ENCODE measurements at regions of chr11 and their contacts with region 1.

Region 1: GRCh38 chr11:72091005-72091691 is 10.5 kb downstream of the LRRC51 start:
- DNase-seq: peak; percentile 55 to 80
- ATAC-seq: peak; percentile 87 to 94 (median 92)
- H3K4me3 ChIP-seq: no peak overlapping the region
- H3K27ac ChIP-seq: peak overlapping the region in 5 of 10 donors; percentile 28 to 67 (median 49)
- H3K4me1 ChIP-seq: peaks cover 0 to 22% (median 12%) of the 10 kb centered on the region in 9 donors
- H3K27me3 ChIP-seq: no peaks in the 10 kb centered on the region
- CTCF ChIP-seq: peak; percentile 71 to 95 (median 88)

Region 2: GRCh38 chr11:71977743-71978418 is 113.3 kb before region 1 on chr11:
- intact Hi-C with region 1: loop called in 4 of 10 experiments (anchors 2 to 5 kb)
- DNase-seq: peak in 1 of 2 donors; percentile 45
- ATAC-seq: peak in 6 of 8 donors; percentile 35 to 81 (median 68)
- H3K4me3 ChIP-seq: no peak overlapping the region
- H3K27ac ChIP-seq: peak overlapping the region in 1 of 10 donors; percentile 41
- H3K4me1 ChIP-seq: peaks cover 0 to 6% (median 0%) of the 10 kb centered on the region in 9 donors
- H3K27me3 ChIP-seq: no peaks in the 10 kb centered on the region
- CTCF ChIP-seq: peak; percentile 59 to 83 (median 74)

Region 3: GRCh38 chr11:72012897-72013721 is 78.0 kb before region 1 on chr11:
- intact Hi-C with region 1: no loop called
- DNase-seq: peak; percentile 71 to 72
- ATAC-seq: peak; percentile 67 to 87 (median 80)
- H3K4me3 ChIP-seq: no peak overlapping the region
- H3K27ac ChIP-seq: peak overlapping the region in 9 of 10 donors; percentile 23 to 76 (median 53)
- H3K4me1 ChIP-seq: peaks cover 33 to 55% (median 43%) of the 10 kb centered on the region in 9 donors
- H3K27me3 ChIP-seq: no peaks in the 10 kb centered on the region
- CTCF ChIP-seq: peak in 2 of 9 donors; percentile 12 to 18

Region 4: GRCh38 chr11:72024069-72024754 is 66.9 kb before region 1 on chr11:
- intact Hi-C with region 1: loop called (anchors 1 to 5 kb)
- DNase-seq: no peak
- ATAC-seq: no peak
- H3K4me3 ChIP-seq: no peak overlapping the region
- H3K27ac ChIP-seq: peak overlapping the region in 1 of 10 donors; percentile 27
- H3K4me1 ChIP-seq: peaks cover 3 to 53% (median 37%) of the 10 kb centered on the region in 9 donors
- H3K27me3 ChIP-seq: no peaks in the 10 kb centered on the region
- CTCF ChIP-seq: no peak

Region 5: GRCh38 chr11:72030472-72031045 is 60.6 kb before region 1 on chr11:
- intact Hi-C with region 1: loop called in 9 of 10 experiments (anchors 1 to 2 kb)
- DNase-seq: no peak
- ATAC-seq: no peak
- H3K4me3 ChIP-seq: no peak overlapping the region
- H3K27ac ChIP-seq: no peak overlapping the region
- H3K4me1 ChIP-seq: peaks cover 5 to 95% (median 61%) of the 10 kb centered on the region in 9 donors
- H3K27me3 ChIP-seq: no peaks in the 10 kb centered on the region
- CTCF ChIP-seq: no peak

Region 6: DNA sequence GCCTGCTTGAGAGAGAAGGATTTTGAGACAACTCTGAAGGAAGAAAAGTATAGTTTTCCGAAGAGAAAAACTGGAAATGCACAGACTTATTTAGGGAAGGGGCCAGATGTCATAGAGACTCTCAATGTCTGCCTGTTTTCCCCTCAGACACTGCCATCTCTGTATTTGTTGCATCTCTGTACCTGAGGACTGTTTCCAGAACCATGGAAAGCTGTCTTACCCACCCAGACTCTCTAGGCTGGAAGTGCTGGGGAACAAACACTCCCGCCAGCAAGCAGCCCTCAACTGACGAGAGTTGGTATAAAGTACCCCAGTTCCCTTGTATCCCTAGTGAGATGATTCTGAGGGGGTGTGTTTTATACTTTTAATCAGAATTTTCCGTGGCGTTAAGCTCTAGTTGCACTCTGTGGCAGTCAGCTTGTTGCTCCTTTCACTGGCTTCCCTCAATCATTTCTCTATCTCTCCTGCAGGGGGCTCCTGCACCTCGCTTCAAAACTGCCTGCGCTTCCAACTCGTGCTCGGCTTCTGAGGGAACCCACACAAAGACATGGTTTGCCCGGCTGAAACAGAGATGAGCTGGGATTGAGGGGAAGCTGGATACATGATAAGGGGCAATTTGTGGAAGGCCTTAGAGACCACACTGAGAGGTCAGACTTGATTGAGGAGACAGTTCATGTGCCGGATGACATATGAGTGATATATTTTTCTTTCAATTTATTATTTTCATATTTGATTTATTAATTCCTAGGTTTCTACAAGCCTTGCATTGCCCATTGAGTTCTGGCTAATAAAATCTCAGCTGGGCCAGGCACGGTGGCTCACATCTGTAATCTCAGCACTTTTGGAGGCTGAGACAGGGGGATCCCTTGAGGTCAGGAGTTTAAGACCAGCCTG is 380.1 kb after region 1 on chr11:
- intact Hi-C with region 1: no loop called
- DNase-seq: peak; percentile 31 to 59
- ATAC-seq: peak; percentile 68 to 87 (median 76)
- H3K4me3 ChIP-seq: no peak overlapping the region
- H3K27ac ChIP-seq: no peak overlapping the region
- H3K4me1 ChIP-seq: peaks cover 0 to 12% (median 5%) of the 10 kb centered on the region in 9 donors
- H3K27me3 ChIP-seq: peaks cover 0 to 37% (median 16%) of the 10 kb centered on the region in 7 donors
- CTCF ChIP-seq: peak; percentile 40 to 89 (median 79)